ENCODE measurements at regions of chr11 and their contacts with region 1.

Region 1: DNA sequence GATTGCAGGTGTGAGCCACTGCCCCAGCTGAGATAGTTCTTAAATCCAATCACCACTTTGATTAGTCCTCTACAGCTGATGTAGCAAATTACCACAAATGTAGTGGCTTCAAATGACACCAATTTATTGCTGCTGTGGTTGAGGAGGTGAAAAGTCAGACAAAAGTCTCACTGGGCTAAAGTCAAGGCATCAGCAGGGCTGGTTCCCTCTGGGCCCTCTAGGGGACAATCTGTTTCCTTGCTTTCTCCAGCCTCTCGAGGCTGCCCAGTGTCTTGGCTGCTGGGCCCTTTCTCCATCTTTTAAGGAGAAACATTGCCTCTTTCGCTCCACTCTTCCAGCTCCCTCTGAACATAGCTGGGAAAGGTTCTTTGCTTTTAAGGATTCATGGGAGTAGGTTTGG is 50.5 kb upstream of the SHANK2 start:
- DNase-seq: no peak
- ATAC-seq: no peak
- H3K4me3 ChIP-seq: no peak overlapping the region
- H3K27ac ChIP-seq: no peak overlapping the region
- H3K4me1 ChIP-seq: no peaks in the 10 kb centered on the region
- H3K27me3 ChIP-seq: no peaks in the 10 kb centered on the region

Region 2: DNA sequence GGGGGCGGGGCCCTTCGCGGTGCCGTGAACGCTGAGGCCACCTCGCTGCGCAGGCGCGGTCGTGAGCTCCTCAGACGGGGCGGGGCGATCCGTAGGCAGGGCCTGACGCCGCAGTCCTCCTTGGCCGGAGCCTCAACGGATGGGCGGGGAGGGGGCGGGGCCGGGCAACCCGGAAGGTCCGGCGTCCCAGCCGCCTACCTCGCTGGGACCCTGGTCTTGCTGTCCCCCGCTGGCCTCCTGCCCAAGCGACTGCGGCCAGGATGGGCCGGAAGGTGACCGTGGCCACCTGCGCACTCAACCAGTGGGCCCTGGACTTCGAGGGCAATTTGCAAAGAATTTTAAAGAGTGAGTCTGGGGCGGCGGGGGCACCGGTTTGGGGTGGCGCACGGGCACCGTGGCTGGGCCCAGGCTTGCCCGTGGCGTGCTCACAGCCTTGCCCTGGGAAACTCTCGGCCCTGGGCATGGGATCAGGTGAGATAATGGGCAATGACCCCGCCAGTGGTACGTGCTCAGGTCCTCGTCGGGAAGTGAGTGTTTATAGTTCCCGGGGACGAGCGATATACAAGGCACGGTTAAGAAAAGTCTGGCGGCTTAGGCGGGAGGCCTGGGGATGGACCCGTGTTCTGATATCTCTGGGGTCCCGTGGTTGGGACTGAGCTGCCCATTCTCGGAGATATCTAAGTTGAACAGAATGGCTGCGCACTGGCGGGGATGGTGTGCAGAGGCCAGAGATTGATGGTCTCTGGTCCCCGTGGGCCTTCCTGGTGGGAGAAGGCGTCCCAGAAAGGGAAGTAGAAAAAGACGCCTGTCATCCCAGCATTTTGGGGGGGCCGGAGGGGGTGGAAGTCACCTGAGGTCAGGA is 150.4 kb after region 1 on chr11 and contains the start of gene NADSYN1:
- intact Hi-C with region 1: loop called in 1 of 2 experiments (anchors 5 kb)
- DNase-seq: peak; percentile 99 to 100
- ATAC-seq: peak; percentile 97
- H3K4me3 ChIP-seq: peak within 1 kb of the TSS; percentile 69 to 91
- H3K27ac ChIP-seq: peak within 1 kb of the TSS in 1 of 2 donors; percentile 69
- H3K4me1 ChIP-seq: no peaks in the 10 kb centered on the region
- H3K27me3 ChIP-seq: no peaks in the 10 kb centered on the region
- total RNA-seq, gene NADSYN1: 52.1 to 88.3 TPM

Region 3: DNA sequence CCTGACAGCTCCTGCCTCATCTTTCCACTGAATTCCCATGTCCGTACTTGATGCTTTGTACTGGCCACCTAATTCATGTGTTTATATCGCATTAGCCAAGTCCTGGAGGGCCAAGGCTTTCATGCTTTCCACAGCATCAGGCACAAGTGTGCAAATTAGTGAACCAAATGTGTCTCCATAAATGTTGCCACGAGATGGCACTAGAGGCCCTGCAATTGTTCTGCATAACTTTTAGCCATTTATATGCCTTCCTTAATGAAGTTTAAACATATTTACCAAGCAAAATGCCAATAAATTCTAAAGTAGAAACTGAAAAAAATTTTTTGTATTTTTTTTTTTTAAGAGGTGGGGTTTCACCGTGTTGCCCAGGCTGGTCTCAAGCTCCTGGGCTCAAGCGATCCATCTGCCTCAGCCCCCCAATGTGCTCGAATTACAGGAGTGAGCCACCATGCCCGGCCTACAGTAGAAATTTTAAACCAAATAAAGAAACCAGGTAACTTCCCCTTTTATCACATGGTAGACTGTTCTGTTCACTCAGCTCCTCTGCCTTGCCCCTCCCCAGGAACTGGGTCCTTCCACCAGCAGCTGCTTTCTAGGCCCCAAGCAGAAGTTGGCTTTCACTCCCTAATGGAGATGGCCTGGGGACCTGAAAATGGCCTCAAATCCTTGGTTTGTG is 675.0 kb after region 1 on chr11:
- intact Hi-C with region 1: no loop called
- DNase-seq: peak in 1 of 2 donors; percentile 60
- ATAC-seq: peak; percentile 77
- H3K4me3 ChIP-seq: no peak overlapping the region
- H3K27ac ChIP-seq: no peak overlapping the region
- H3K4me1 ChIP-seq: no peaks in the 10 kb centered on the region
- H3K27me3 ChIP-seq: no peaks in the 10 kb centered on the region